ENCODE measurements at regions of chr5 and their contacts with region 1.

Region 1: GRCh38 chr5:121949867-121950266 is 11.9 kb upstream of the SRFBP1 start:
- DNase-seq: peak in 4 of 9 donors; percentile 8 to 27 (median 18)
- ATAC-seq: peak; percentile 36
- H3K4me3 ChIP-seq: no peak overlapping the region
- H3K4me3 Mint-ChIP-seq: no peak overlapping the region
- H3K27ac ChIP-seq: no peak overlapping the region
- H3K27ac Mint-ChIP-seq: no peak overlapping the region
- H3K4me1 ChIP-seq: no peaks in the 10 kb centered on the region
- H3K4me1 Mint-ChIP-seq: no peaks in the 10 kb centered on the region
- H3K27me3 ChIP-seq: no peaks in the 10 kb centered on the region
- H3K27me3 Mint-ChIP-seq: peaks cover 4 to 14% (median 9%) of the 10 kb centered on the region in 5 donors

Region 2: DNA sequence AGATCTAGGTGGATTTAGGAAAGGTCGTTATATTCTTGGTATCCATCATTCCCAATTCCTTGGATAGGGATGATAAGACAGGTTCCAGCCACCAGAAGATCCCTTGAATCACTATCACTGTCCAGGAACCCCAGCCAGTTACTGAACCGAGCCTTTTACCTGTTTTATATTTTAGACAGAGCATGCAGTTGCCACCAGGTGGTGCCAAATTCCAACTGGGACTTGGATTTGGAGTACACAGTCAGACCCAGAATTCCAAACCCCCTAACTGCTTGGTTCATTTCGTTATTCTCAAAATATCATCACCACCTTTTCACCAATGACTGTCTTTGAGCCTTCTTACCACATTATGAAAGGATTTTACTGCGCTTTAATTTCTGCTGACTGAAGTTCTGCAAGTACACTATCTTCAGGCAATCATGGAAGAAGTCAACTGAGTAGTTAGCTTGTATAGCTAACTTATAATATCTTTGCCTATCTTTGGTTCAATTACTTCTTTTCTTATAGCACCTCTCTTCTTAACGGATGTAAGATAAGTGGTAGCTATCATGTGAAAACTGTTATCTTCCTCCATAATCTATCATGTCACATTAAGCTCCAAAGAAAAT is 1293.9 kb before region 1 on chr5:
- CTCF ChIA-PET with region 1: no interaction called
- POLR2A ChIA-PET with region 1: no interaction called
- intact Hi-C with region 1: loop called in 1 of 2 experiments (anchors 5 kb)
- DNase-seq: no peak
- ATAC-seq: no peak
- H3K4me3 ChIP-seq: no peak overlapping the region
- H3K4me3 Mint-ChIP-seq: no peak overlapping the region
- H3K27ac ChIP-seq: no peak overlapping the region
- H3K27ac Mint-ChIP-seq: no peak overlapping the region
- H3K4me1 ChIP-seq: no peaks in the 10 kb centered on the region
- H3K4me1 Mint-ChIP-seq: no peaks in the 10 kb centered on the region
- H3K27me3 ChIP-seq: no peaks in the 10 kb centered on the region
- H3K27me3 Mint-ChIP-seq: no peaks in the 10 kb centered on the region